Activated CD4-positive, alpha-beta T cell treated with anti-CD3 and anti-CD28 coated beads, Interleukin-2, amount 10 ng/mL, durations not matched to agents 24 days and 14 days (primary cell): ENCODE measurements at regions of chr17 and their contacts with region 1.

Region 1: GRCh38 chr17:4733073-4733531 is 1.9 kb downstream of the MED11 start:
- DNase-seq: peak; percentile 77
- H3K4me3 Mint-ChIP-seq: peak overlapping the region; percentile 45
- H3K27ac Mint-ChIP-seq: peak overlapping the region; percentile 66
- H3K4me1 Mint-ChIP-seq: peaks cover 38% of the 10 kb centered on the region
- H3K27me3 Mint-ChIP-seq: peaks cover 5% of the 10 kb centered on the region

Region 2: DNA sequence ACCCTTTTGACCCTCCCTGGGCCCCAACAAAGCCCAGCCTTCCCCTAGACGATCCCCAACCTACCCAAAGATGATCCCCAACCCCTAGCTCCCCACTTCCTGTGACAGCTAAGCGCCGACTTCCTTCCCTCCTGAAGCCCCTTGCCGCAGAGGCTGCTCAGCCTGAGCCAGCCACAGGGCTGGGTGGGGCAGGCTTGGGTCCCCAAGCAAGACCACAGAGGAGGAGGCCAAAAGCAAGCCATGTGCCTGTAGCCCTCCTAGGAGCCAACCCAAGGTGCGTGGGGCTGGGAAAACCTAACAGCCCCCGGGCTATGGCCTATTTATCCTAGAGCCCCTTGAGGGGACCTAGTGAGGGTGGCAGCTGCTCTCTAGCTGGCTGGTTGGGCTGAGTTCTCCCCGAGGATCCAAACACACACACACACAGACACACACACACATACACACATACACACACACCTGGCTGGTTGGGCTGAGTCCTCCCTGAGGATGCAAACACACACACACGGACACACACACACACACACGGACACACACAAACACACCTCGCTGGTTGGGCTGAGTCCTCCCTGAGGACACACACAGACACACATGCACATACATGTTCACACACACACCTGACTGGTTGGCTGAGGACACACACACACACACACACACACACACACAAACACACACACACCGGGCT is 17.9 kb before region 1 on chr17:
- intact Hi-C with region 1: loop called (anchors 1 kb)
- DNase-seq: peak; percentile 88
- H3K4me3 Mint-ChIP-seq: peak overlapping the region; percentile 81
- H3K27ac Mint-ChIP-seq: peak overlapping the region; percentile 89
- H3K4me1 Mint-ChIP-seq: peaks cover 41% of the 10 kb centered on the region
- H3K27me3 Mint-ChIP-seq: no peaks in the 10 kb centered on the region

Region 3: DNA sequence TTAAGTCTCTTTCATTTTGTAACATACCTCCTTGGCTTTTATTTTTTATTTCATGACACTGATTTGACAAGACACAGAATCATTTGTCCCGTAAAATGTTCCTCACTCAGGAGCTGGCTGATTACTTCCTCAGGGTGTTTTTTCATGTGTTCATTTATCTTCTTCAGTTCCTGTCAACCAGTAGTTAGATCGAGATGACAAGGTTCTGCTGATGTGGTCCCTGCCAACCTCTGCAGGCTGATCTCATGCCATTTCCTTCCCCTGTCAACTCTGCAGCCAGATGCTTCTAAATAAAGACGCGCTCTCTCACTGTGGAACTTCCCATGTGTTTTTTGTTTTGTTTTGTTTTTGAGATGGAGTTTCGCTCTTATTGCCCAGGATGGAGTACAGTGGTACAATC is 14.7 kb after region 1 on chr17:
- intact Hi-C with region 1: no loop called
- DNase-seq: peak; percentile 82
- H3K4me3 Mint-ChIP-seq: peak overlapping the region; percentile 60
- H3K27ac Mint-ChIP-seq: peak overlapping the region; percentile 69
- H3K4me1 Mint-ChIP-seq: peaks cover 19% of the 10 kb centered on the region
- H3K27me3 Mint-ChIP-seq: peaks cover 33% of the 10 kb centered on the region

Region 4: GRCh38 chr17:4891411-4892342 is 158.6 kb after region 1 on chr17:
- intact Hi-C with region 1: loop called (anchors 2 kb)
- DNase-seq: no peak
- H3K4me3 Mint-ChIP-seq: no peak overlapping the region
- H3K27ac Mint-ChIP-seq: no peak overlapping the region
- H3K4me1 Mint-ChIP-seq: no peaks in the 10 kb centered on the region
- H3K27me3 Mint-ChIP-seq: no peaks in the 10 kb centered on the region

Region 5: DNA sequence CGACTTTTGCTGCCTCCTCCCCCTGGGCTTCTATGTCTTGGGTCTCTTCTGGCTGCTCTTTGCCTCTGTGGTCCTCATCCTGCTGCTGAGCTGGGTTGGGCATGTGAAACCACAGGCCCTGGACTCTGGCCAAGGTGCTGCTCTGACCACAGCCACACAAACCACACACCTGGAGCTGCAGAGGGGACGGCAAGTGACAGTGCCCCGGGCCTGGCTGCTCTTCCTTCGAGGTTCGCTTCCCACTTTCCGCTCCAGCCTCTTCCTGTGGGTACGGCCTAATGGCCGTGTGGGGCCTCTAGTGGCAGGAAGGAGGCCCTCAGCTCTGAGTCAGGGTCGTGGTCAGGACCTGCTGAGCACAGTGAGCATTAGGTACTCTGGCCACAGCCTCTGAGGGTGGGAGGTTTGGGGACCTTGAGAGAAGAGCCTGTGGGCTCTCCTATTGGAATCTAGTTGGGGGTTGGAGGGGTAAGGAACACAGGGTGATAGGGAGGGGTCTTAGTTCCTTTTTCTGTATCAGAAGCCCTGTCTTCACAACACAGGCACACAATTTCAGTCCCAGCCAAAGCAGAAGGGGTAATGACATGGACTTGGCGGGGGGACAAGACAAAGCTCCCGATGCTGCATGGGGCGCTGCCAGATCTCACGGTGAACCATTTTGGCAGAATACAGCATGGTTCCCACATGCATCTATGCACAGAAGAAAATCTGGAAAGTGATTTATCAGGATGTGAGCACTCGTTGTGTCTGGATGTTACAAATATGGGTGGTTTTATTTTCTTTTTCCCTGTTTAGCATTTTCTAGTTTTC is 201.3 kb after region 1 on chr17:
- intact Hi-C with region 1: no loop called
- DNase-seq: no peak
- H3K4me3 Mint-ChIP-seq: no peak overlapping the region
- H3K27ac Mint-ChIP-seq: no peak overlapping the region
- H3K4me1 Mint-ChIP-seq: peaks cover 31% of the 10 kb centered on the region
- H3K27me3 Mint-ChIP-seq: no peaks in the 10 kb centered on the region